T-cell (primary cell): ENCODE measurements at regions of chr11 and their contacts with region 1.

Region 1: GRCh38 chr11:18600915-18601569 is 1.5 kb downstream of the MISFA start:
- DNase-seq: no peak
- ATAC-seq: no peak
- H3K4me3 ChIP-seq: no peak overlapping the region
- H3K4me3 Mint-ChIP-seq: no peak overlapping the region
- H3K27ac ChIP-seq: no peak overlapping the region
- H3K27ac Mint-ChIP-seq: no peak overlapping the region
- H3K4me1 ChIP-seq: no peaks in the 10 kb centered on the region
- H3K4me1 Mint-ChIP-seq: no peaks in the 10 kb centered on the region
- H3K27me3 ChIP-seq: no peaks in the 10 kb centered on the region
- H3K27me3 Mint-ChIP-seq: no peaks in the 10 kb centered on the region

Region 2: GRCh38 chr11:18332302-18332701 is 268.7 kb before region 1 on chr11:
- CTCF ChIA-PET with region 1: no interaction called
- POLR2A ChIA-PET with region 1: interaction called in 1 of 2 experiments, 15 read pairs
- DNase-seq: peak in 21 of 35 experiments; percentile 5 to 74 (median 20)
- ATAC-seq: peak in 3 of 4 experiments; percentile 56 to 88 (median 56)
- H3K4me3 ChIP-seq: no peak overlapping the region
- H3K4me3 Mint-ChIP-seq: peak overlapping the region; percentile 45 to 70 (median 66)
- H3K27ac ChIP-seq: peak overlapping the region; percentile 65
- H3K27ac Mint-ChIP-seq: peak overlapping the region; percentile 86 to 91
- H3K4me1 ChIP-seq: peaks cover 22 to 30% of the 10 kb centered on the region in 2 experiments
- H3K4me1 Mint-ChIP-seq: peaks cover 57 to 67% (median 62%) of the 10 kb centered on the region in 3 donors
- H3K27me3 ChIP-seq: no peaks in the 10 kb centered on the region
- H3K27me3 Mint-ChIP-seq: no peaks in the 10 kb centered on the region

Region 3: DNA sequence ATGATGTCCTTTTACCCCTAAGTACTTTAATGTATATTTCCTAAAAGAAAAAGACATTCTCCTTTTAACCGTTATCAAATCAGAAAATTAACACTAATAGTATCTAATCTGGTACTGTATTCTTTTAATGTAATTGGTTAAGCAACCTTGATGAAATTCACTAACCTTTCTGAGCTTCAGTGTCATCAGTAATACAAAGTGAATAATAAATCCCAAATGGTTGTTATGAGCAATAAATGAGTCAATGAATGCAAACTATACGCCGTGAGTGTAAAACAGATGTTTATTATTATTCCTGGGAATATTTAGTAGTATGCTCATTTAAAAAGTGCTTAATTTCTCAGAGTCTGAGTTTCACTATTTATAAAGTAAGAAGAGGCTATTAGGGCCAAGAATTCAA is 34.0 kb before region 1 on chr11:
- CTCF ChIA-PET with region 1: no interaction called
- POLR2A ChIA-PET with region 1: no interaction called
- DNase-seq: no peak
- ATAC-seq: no peak
- H3K4me3 ChIP-seq: no peak overlapping the region
- H3K4me3 Mint-ChIP-seq: no peak overlapping the region
- H3K27ac ChIP-seq: no peak overlapping the region
- H3K27ac Mint-ChIP-seq: peak overlapping the region in 1 of 2 donors; percentile 36
- H3K4me1 ChIP-seq: no peaks in the 10 kb centered on the region
- H3K4me1 Mint-ChIP-seq: no peaks in the 10 kb centered on the region
- H3K27me3 ChIP-seq: no peaks in the 10 kb centered on the region
- H3K27me3 Mint-ChIP-seq: no peaks in the 10 kb centered on the region

Region 4: GRCh38 chr11:18890615-18891014 is 289.6 kb after region 1 on chr11:
- CTCF ChIA-PET with region 1: no interaction called
- POLR2A ChIA-PET with region 1: no interaction called
- DNase-seq: no peak
- ATAC-seq: no peak
- H3K4me3 ChIP-seq: no peak overlapping the region
- H3K4me3 Mint-ChIP-seq: no peak overlapping the region
- H3K27ac ChIP-seq: no peak overlapping the region
- H3K27ac Mint-ChIP-seq: no peak overlapping the region
- H3K4me1 ChIP-seq: no peaks in the 10 kb centered on the region
- H3K4me1 Mint-ChIP-seq: no peaks in the 10 kb centered on the region
- H3K27me3 ChIP-seq: peaks cover 0 to 7% of the 10 kb centered on the region in 2 experiments
- H3K27me3 Mint-ChIP-seq: peaks cover 15 to 20% of the 10 kb centered on the region in 2 donors